MCF 10A (cell line): ENCODE measurements at regions of chr1 and their contacts with region 1.

Region 1: GRCh38 chr1:37553927-37554808 is at the start of gene SNIP1:
- DNase-seq: peak; percentile 94
- H3K4me3 Mint-ChIP-seq: peak within 1 kb of the TSS; percentile 96
- H3K27ac Mint-ChIP-seq: peak within 1 kb of the TSS; percentile 99
- H3K4me1 Mint-ChIP-seq: peaks cover 16% of the 10 kb centered on the region
- H3K27me3 Mint-ChIP-seq: no peaks in the 10 kb centered on the region
- CTCF ChIP-seq: no peak
- total RNA-seq, gene SNIP1: 26.4 and 32.0 TPM in 2 replicates

Region 2: GRCh38 chr1:37458528-37458927 is 95.6 kb before region 1 on chr1:
- CTCF ChIA-PET with region 1: interaction called, 3 read pairs
- POLR2A ChIA-PET with region 1: interaction called, 3 read pairs
- intact Hi-C with region 1: loop called (anchors 5 kb)
- DNase-seq: no peak
- H3K4me3 Mint-ChIP-seq: no peak overlapping the region
- H3K27ac Mint-ChIP-seq: no peak overlapping the region
- H3K4me1 Mint-ChIP-seq: peaks cover 9% of the 10 kb centered on the region
- H3K27me3 Mint-ChIP-seq: no peaks in the 10 kb centered on the region
- CTCF ChIP-seq: no peak

Region 3: GRCh38 chr1:37537378-37537777 is 16.8 kb before region 1 on chr1:
- CTCF ChIA-PET with region 1: no interaction called
- POLR2A ChIA-PET with region 1: interaction called, 19 read pairs
- intact Hi-C with region 1: no loop called
- DNase-seq: peak; percentile 91
- H3K4me3 Mint-ChIP-seq: peak overlapping the region; percentile 22
- H3K27ac Mint-ChIP-seq: peak overlapping the region; percentile 89
- H3K4me1 Mint-ChIP-seq: peaks cover 29% of the 10 kb centered on the region
- H3K27me3 Mint-ChIP-seq: no peaks in the 10 kb centered on the region
- CTCF ChIP-seq: no peak